ENCODE measurements at regions of chr2 and their contacts with region 1.

Region 1: DNA sequence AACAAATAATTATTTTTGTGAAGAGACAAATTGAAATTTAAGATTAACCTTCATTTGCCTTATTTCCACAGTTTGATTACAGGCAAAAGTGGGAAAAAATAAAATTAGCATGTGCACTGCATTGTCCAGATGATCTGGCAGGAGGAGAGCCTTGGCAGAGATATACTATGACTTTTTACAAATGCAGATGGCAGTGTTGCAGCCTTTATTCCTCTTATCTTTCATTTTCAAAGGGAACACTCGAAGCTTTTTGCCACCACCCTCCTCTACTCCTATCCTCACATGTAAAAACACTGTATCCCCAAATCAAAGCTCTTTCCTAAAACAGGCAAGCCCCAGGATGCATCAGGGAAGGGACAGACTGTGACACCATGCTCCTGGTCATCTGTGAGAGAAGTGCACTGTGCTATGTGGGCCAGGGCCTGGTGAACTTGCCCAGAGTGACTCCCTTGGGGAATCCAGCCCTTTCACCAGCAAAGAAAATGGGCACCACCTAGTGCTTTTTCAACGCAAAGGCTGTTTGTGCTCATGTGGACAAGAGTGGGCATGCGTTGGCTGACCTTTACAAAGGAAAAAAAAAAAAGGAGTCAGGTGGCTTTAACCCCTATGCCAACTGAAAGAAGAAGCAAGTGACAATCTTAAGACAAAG is 74.7 kb upstream of the ETAA1 start:
- DNase-seq: peak; percentile 60 to 75
- ATAC-seq: peak; percentile 81
- H3K4me3 ChIP-seq: no peak overlapping the region
- H3K27ac ChIP-seq: peak overlapping the region in 1 of 2 donors; percentile 79
- H3K4me1 ChIP-seq: no peaks in the 10 kb centered on the region
- H3K27me3 ChIP-seq: no peaks in the 10 kb centered on the region

Region 2: DNA sequence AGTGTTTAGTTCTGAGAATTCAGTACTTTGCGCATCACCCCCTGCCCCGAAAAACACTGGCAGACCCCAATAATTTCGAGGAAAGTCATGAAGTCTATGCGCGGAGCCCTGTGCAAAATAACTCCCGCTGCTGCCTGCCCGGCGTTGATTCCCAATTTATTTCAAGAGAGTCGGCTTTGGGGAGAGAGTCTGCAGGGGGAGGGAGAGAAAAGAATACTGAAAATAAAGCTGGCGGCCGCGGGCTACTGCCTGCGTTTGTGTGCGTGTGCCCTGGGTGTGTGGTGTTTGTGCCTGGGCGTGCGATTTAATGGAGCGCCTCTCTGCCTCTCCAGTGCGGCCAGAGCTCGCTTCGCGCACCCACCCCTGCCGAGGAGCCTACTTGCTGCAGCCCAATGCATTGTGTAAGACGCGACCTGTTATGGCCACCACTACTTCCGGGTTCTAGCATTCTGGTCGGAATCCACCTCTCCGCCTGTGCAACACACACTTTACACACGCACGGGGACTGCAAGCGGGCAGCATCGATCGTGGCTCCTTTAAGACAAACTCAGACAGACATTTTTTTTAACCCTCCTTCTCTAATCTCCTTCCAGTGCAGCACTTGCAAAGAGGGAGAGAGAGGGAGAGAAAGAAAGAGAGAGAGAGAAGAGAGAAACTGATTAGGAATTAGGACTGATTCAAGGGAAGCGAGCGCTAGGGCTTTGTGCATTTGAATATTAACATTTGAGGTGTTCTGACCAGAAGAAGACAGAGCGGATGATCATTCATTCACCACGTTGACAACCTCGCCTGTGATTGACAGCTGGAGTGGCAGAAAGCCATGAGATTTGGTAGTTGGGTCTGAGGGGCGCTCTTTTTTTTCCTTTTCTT is 887.6 kb before region 1 on chr2 and contains the start of gene MEIS1:
- intact Hi-C with region 1: loop called in 1 of 2 experiments (anchors 5 kb)
- DNase-seq: peak; percentile 93 to 94
- ATAC-seq: peak; percentile 93
- H3K4me3 ChIP-seq: peak within 1 kb of the TSS; percentile 91 to 95
- H3K27ac ChIP-seq: peak within 1 kb of the TSS; percentile 64 to 87
- H3K4me1 ChIP-seq: no peaks in the 10 kb centered on the region
- H3K27me3 ChIP-seq: no peaks in the 10 kb centered on the region
- total RNA-seq, gene MEIS1: 35.4 to 76.6 TPM

Region 3: DNA sequence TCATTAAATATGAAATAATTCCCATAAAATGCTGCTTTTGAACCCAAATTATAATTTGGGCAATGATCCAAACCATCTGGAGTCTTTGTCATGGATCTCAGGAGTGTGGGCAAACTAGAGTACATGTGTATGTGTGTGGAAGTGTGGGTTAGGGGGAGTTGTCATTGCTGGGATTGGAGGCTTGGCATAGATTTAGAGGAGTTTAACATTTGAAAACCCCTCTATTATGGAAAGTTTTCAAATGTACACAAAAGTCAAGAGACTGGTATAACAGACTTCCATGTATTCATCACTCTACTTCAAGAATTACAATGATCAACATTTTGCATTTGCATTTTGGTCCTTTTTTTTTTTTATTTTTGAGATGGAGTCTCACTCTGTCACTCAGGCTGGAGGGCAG is 728.5 kb before region 1 on chr2:
- intact Hi-C with region 1: loop called in 1 of 2 experiments (anchors 5 kb)
- DNase-seq: no peak
- ATAC-seq: no peak
- H3K4me3 ChIP-seq: no peak overlapping the region
- H3K27ac ChIP-seq: no peak overlapping the region
- H3K4me1 ChIP-seq: peaks cover 0 to 2% of the 10 kb centered on the region in 2 donors
- H3K27me3 ChIP-seq: no peaks in the 10 kb centered on the region

Region 4: DNA sequence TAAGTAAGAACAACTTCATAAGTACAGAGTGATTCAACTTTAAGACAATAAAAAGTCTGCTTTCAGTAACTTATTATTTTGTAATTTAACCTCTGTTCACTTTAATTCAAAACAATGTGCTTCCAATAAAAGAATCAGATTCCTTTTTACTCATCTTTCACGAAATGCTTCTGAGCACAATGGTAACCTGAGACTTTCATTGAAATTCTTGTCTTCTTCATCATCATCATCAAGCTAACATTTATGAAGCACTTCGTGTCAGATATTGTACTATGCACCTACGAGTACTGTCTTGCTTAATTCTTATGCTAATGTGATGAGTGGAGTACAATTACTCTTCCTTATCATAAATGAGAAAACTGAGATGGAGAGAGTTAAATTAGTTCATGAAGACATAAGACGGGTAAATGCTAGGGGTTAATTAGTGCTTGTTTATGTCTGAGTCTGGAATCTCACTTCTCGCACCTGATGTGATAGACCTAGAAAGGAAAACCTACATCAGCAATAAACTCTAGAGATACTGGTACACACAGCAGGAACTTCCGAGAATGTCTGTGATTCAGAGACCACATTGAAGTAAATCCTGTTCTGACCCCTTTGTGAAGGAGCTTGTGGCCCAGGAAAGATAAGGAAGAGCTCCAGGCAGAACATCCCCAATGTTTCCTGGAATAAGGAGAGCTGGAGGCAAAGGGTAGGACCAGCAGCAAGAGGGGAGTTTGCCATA is 152.9 kb before region 1 on chr2:
- intact Hi-C with region 1: no loop called
- DNase-seq: no peak
- ATAC-seq: no peak
- H3K4me3 ChIP-seq: no peak overlapping the region
- H3K27ac ChIP-seq: no peak overlapping the region
- H3K4me1 ChIP-seq: no peaks in the 10 kb centered on the region
- H3K27me3 ChIP-seq: no peaks in the 10 kb centered on the region

Region 5: GRCh38 chr2:67259581-67260342 is 62.7 kb before region 1 on chr2:
- intact Hi-C with region 1: loop called in 1 of 2 experiments (anchors 5 kb)
- DNase-seq: peak; percentile 56 to 66
- ATAC-seq: peak; percentile 60
- H3K4me3 ChIP-seq: peak overlapping the region in 1 of 2 donors; percentile 66
- H3K27ac ChIP-seq: peak overlapping the region; percentile 38 to 99
- H3K4me1 ChIP-seq: peaks cover 0 to 3% of the 10 kb centered on the region in 2 donors
- H3K27me3 ChIP-seq: no peaks in the 10 kb centered on the region

Measured in aorta (tissue), 5 donors.